Mammary epithelial cell (primary cell): ENCODE measurements at regions of chr3 and their contacts with region 1.

Region 1: GRCh38 chr3:140809316-140809715 is 131.5 kb downstream of the TRIM42 start:
- DNase-seq: no peak
- H3K4me3 ChIP-seq: no peak overlapping the region
- H3K27ac ChIP-seq: no peak overlapping the region
- H3K4me1 ChIP-seq: no peaks in the 10 kb centered on the region
- H3K27me3 ChIP-seq: no peaks in the 10 kb centered on the region
- CTCF ChIP-seq: no peak

Region 2: GRCh38 chr3:140753865-140754754 is 55.2 kb before region 1 on chr3:
- CTCF ChIA-PET with region 1: interaction called, 11 read pairs
- dilution Hi-C with region 1: no loop called
- in situ Hi-C with region 1: no loop called
- intact Hi-C with region 1: no loop called
- DNase-seq: peak; percentile 85
- H3K4me3 ChIP-seq: no peak overlapping the region
- H3K27ac ChIP-seq: no peak overlapping the region
- H3K4me1 ChIP-seq: peaks cover 10% of the 10 kb centered on the region
- H3K27me3 ChIP-seq: peaks cover 23% of the 10 kb centered on the region
- CTCF ChIP-seq: no peak

Region 3: GRCh38 chr3:140850210-140850808 is 41.0 kb after region 1 on chr3:
- CTCF ChIA-PET with region 1: no interaction called
- dilution Hi-C with region 1: no loop called
- in situ Hi-C with region 1: no loop called
- intact Hi-C with region 1: no loop called
- DNase-seq: peak; percentile 67
- H3K4me3 ChIP-seq: no peak overlapping the region
- H3K27ac ChIP-seq: no peak overlapping the region
- H3K4me1 ChIP-seq: peaks cover 9% of the 10 kb centered on the region
- H3K27me3 ChIP-seq: no peaks in the 10 kb centered on the region
- CTCF ChIP-seq: no peak